Activated T-helper 2 cell treated with anti-CD3 and anti-CD28 coated beads, Interferon-gamma antibody, Interleukin-2, Interleukin-4, amounts not matched to agents 10 μg/mL and 5 μg/mL and 100 μg/mL, durations not matched to agents 14 hours and 24 hours and 36 hours (primary cell): ENCODE measurements at regions of chr11 and their contacts with region 1.

Region 1: GRCh38 chr11:59283825-59284772 is 71.4 kb upstream of the MPEG1 start:
- DNase-seq: peak; percentile 31
- H3K4me3 Mint-ChIP-seq: peak overlapping the region; percentile 46
- H3K27ac Mint-ChIP-seq: no peak overlapping the region
- H3K4me1 Mint-ChIP-seq: peaks cover 10% of the 10 kb centered on the region
- H3K27me3 Mint-ChIP-seq: peaks cover 5% of the 10 kb centered on the region

Region 2: DNA sequence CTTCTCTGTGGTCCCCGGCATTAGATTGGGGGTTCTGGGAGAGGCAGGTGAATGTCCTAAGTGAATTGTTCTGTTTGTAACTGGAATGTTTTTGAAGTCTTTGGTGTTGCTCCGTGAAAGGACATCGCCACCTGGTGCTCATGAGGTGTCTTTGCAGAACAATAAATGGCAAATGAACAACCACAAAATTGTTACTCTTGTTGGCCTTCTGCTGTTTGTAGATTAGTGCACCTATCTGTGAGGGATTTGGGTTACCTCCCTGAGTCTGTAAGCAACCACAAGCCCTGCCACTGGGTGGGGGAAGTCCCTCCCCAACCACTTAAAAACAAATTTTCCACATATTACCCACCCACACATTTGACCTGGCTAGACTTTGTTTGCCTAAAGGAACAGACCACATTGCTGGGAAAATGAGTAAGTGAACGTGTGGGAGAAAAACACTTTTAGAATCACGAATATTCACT is 76.1 kb before region 1 on chr11:
- intact Hi-C with region 1: loop called (anchors 2 kb)
- DNase-seq: peak; percentile 14
- H3K4me3 Mint-ChIP-seq: no peak overlapping the region
- H3K27ac Mint-ChIP-seq: no peak overlapping the region
- H3K4me1 Mint-ChIP-seq: peaks cover 24% of the 10 kb centered on the region
- H3K27me3 Mint-ChIP-seq: peaks cover 44% of the 10 kb centered on the region

Region 3: DNA sequence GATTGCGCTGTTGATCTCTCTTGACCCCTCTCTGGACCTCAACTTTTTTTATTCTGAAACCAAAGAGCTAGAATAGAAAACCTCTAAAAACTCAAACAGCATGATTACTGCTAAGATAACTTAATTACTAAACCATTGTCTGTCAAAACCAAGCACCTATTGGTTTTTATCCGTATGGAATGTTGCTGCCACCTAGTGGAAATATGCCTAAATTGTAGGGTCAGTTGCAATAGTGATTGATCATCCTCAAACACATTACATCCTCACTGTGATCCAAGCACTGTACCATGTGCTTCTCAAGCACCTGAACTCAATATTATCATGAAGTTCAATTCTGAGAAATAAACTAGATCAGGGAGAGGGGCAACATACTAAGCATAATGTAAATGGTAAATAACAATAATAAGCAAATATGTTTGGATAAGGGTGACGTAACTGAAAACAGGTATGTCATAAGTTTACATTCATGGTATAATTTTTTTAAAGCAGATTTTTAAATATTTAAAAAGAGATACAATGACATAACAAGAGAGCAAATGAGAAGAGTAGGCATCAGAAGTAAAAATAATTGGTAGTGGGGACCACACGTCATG is 145.9 kb after region 1 on chr11:
- intact Hi-C with region 1: loop called (anchors 10 kb)
- DNase-seq: peak; percentile 12
- H3K4me3 Mint-ChIP-seq: no peak overlapping the region
- H3K27ac Mint-ChIP-seq: no peak overlapping the region
- H3K4me1 Mint-ChIP-seq: no peaks in the 10 kb centered on the region
- H3K27me3 Mint-ChIP-seq: peaks cover 8% of the 10 kb centered on the region